CD4-positive, alpha-beta T cell (primary cell): ENCODE measurements at regions of chr14 and their contacts with region 1.

Region 1: DNA sequence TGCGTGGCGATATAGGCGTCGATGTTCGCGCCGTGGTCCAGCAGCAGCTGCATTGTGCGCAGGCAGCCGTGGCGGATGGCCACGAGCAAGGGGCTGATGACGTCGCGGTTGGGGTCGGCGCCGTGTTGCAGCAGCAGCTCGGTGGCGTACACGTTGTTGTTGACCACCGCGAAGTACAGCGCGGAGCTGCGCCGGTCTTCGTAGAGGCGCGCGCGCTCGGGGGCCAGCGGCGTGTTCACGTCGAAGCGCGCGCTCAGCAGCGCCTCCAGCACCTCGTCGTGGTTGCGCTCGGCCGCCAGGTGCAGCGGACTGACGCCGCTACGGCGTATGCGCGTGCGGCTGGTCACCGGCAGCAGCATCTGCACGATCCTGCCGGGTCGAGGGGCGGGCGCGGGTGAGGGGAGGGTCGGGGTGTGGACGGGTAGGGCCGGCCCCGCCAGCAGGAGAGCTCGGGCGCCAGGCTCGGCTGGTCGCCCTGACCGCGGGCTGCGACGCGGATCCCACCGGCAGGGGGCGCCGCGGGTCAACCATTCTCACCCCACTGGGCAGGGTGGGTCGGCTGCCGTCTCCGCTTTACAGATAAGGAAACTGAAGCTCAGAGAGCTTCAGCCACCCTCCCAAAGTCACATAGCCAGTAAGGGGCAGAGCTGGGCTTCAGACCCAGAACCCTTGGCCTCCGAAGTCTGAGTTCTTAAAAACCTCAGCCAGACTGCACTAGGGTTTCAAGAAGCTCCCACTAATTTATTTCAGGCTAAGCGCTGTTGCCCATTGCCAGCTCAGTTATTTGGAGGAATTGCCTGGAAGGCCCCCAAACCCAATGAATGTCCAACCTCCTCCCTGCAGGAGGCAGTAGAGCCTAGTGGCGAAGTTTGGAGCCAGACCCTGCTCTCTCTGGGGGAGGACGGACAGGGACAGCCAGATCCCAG is 12.4 kb downstream of the FAM181A start:
- DNase-seq: peak; percentile 75 to 95 (median 90)
- ATAC-seq: peak; percentile 91
- H3K4me3 ChIP-seq: peak overlapping the region; percentile 44
- H3K4me3 Mint-ChIP-seq: peak overlapping the region; percentile 68
- H3K27ac ChIP-seq: no peak overlapping the region
- H3K27ac Mint-ChIP-seq: no peak overlapping the region
- H3K4me1 ChIP-seq: peaks cover 15% of the 10 kb centered on the region
- H3K4me1 Mint-ChIP-seq: no peaks in the 10 kb centered on the region
- H3K27me3 ChIP-seq: peaks cover 0 to 7% of the 10 kb centered on the region in 2 experiments
- H3K27me3 Mint-ChIP-seq: peaks cover 9% of the 10 kb centered on the region
- CTCF ChIP-seq: peak; percentile 99

Region 2: DNA sequence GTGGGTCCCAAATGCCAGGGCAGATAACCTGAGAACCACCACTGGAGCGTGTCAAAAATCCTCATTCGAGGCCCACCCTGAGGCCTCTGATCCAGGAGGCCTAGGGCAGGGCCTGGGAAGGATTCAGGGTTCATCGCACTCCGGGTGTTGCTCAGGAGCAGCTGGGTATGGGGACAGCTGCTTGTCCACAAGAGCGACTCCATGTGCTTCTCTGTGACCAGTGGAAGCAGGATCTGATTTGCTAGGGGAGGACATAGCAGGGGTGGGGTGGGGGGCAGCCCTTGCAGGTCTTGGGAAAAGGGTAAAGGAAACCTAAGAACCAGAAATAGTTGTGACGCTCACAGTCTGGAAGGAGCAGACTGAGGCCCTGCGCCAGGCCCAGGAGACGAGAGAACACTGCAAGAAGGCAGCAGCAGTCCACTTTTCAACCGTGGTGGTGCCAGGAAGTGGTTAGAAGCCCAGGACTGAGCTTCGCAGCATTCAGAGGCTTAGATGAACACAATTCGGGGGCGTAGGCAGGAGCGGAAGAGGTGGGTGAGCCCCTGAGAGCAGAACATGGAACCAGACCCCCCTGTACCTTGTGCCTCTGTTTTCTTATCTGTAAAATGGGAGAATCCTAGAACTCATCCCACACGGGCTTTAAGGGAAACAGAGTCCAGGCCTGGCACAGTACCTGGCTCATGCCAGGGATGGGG is 857.5 kb before region 1 on chr14:
- CTCF ChIA-PET with region 1: no interaction called
- POLR2A ChIA-PET with region 1: no interaction called
- intact Hi-C with region 1: no loop called
- DNase-seq: peak in 3 of 14 experiments; percentile 16 to 55 (median 24)
- ATAC-seq: no peak
- H3K4me3 ChIP-seq: no peak overlapping the region
- H3K4me3 Mint-ChIP-seq: peak overlapping the region; percentile 13
- H3K27ac ChIP-seq: no peak overlapping the region
- H3K27ac Mint-ChIP-seq: peak overlapping the region; percentile 47
- H3K4me1 ChIP-seq: peaks cover 29% of the 10 kb centered on the region
- H3K4me1 Mint-ChIP-seq: peaks cover 23% of the 10 kb centered on the region
- H3K27me3 ChIP-seq: no peaks in the 10 kb centered on the region
- H3K27me3 Mint-ChIP-seq: no peaks in the 10 kb centered on the region
- CTCF ChIP-seq: no peak

Region 3: GRCh38 chr14:93824518-93825234 is 114.9 kb before region 1 on chr14:
- CTCF ChIA-PET with region 1: no interaction called
- POLR2A ChIA-PET with region 1: no interaction called
- intact Hi-C with region 1: no loop called
- DNase-seq: peak in 1 of 14 experiments; percentile 9
- ATAC-seq: no peak
- H3K4me3 ChIP-seq: no peak overlapping the region
- H3K4me3 Mint-ChIP-seq: no peak overlapping the region
- H3K27ac ChIP-seq: no peak overlapping the region
- H3K27ac Mint-ChIP-seq: no peak overlapping the region
- H3K4me1 ChIP-seq: no peaks in the 10 kb centered on the region
- H3K4me1 Mint-ChIP-seq: no peaks in the 10 kb centered on the region
- H3K27me3 ChIP-seq: peaks cover 5% of the 10 kb centered on the region in 2 experiments
- H3K27me3 Mint-ChIP-seq: peaks cover 33% of the 10 kb centered on the region
- CTCF ChIP-seq: no peak

Region 4: DNA sequence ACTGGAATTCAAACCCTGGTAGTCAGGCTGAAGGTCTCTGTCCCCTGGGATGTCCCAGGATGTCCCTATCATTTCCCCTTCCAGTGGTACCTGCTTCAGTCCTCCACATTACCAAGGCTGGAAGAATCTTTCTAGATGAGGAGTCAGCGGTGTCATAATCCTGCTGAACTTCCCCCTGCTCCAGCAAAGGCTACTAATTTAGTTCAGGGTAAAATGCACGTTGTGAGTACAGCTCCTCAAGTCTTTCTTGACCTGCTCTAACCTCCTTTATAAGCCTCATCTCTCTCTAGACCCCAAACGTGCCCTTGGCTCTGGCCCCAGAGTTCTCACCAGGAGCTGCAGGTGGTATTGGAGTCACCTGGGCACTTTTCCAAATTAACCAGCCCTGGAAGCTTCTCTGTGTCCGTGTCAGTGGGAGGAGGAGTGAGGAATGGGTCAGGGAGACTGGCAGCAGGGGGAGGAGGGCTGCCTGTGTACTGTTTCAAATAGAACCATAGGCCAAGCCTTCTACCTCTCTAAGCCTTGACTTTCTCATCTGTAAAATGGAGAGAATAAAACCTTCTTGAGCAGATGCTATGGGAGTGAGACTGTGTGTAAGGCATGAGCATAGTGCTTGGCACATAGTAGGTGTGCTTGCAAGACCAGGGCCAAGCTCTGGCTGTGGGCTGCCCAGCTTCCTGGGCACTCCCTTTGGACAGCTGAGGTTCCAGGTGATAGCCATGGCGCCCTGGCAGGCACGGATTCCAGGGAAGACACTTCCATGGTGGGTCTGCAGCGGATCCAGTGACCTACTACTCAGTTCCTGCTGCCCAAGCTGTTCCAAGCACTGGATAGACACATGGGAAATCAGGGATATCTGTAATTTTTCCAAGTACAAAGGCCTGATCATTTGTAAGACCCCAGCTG is 12.3 kb after region 1 on chr14:
- CTCF ChIA-PET with region 1: interaction called, 21 read pairs
- POLR2A ChIA-PET with region 1: interaction called, 11 read pairs
- intact Hi-C with region 1: loop called in 1 of 2 experiments (anchors 1 kb)
- DNase-seq: no peak
- ATAC-seq: no peak
- H3K4me3 ChIP-seq: no peak overlapping the region
- H3K4me3 Mint-ChIP-seq: no peak overlapping the region
- H3K27ac ChIP-seq: no peak overlapping the region
- H3K27ac Mint-ChIP-seq: no peak overlapping the region
- H3K4me1 ChIP-seq: peaks cover 49% of the 10 kb centered on the region
- H3K4me1 Mint-ChIP-seq: peaks cover 41% of the 10 kb centered on the region
- H3K27me3 ChIP-seq: no peaks in the 10 kb centered on the region
- H3K27me3 Mint-ChIP-seq: no peaks in the 10 kb centered on the region
- CTCF ChIP-seq: no peak

Region 5: GRCh38 chr14:93959239-93960107 is 19.9 kb after region 1 on chr14:
- CTCF ChIA-PET with region 1: interaction called, 31 read pairs
- POLR2A ChIA-PET with region 1: interaction called, 20 read pairs
- intact Hi-C with region 1: loop called in 1 of 2 experiments (anchors 1 kb)
- DNase-seq: peak; percentile 77 to 98 (median 88)
- ATAC-seq: peak; percentile 79
- H3K4me3 ChIP-seq: peak overlapping the region; percentile 24
- H3K4me3 Mint-ChIP-seq: peak overlapping the region; percentile 76
- H3K27ac ChIP-seq: peak overlapping the region; percentile 42 to 71
- H3K27ac Mint-ChIP-seq: peak overlapping the region; percentile 91
- H3K4me1 ChIP-seq: peaks cover 100% of the 10 kb centered on the region
- H3K4me1 Mint-ChIP-seq: peaks cover 96% of the 10 kb centered on the region
- H3K27me3 ChIP-seq: no peaks in the 10 kb centered on the region
- H3K27me3 Mint-ChIP-seq: no peaks in the 10 kb centered on the region
- CTCF ChIP-seq: no peak

Region 6: GRCh38 chr14:93970549-93970946 is 31.0 kb after region 1 on chr14:
- CTCF ChIA-PET with region 1: interaction called, 163 read pairs
- POLR2A ChIA-PET with region 1: interaction called, 80 read pairs
- intact Hi-C with region 1: loop called (anchors 1 kb)
- DNase-seq: peak; percentile 61 to 87 (median 70)
- ATAC-seq: peak; percentile 95
- H3K4me3 ChIP-seq: peak overlapping the region; percentile 59
- H3K4me3 Mint-ChIP-seq: peak overlapping the region; percentile 93
- H3K27ac ChIP-seq: no peak overlapping the region
- H3K27ac Mint-ChIP-seq: peak overlapping the region; percentile 28
- H3K4me1 ChIP-seq: peaks cover 75% of the 10 kb centered on the region
- H3K4me1 Mint-ChIP-seq: peaks cover 32% of the 10 kb centered on the region
- H3K27me3 ChIP-seq: no peaks in the 10 kb centered on the region
- H3K27me3 Mint-ChIP-seq: no peaks in the 10 kb centered on the region
- CTCF ChIP-seq: peak; percentile 72

Region 7: GRCh38 chr14:93975791-93976476 is 36.4 kb after region 1 on chr14:
- CTCF ChIA-PET with region 1: interaction called, 163 read pairs
- POLR2A ChIA-PET with region 1: interaction called, 80 read pairs
- intact Hi-C with region 1: no loop called
- DNase-seq: peak in 2 of 14 experiments; percentile 48 to 52
- ATAC-seq: no peak
- H3K4me3 ChIP-seq: peak overlapping the region; percentile 17
- H3K4me3 Mint-ChIP-seq: peak overlapping the region; percentile 8
- H3K27ac ChIP-seq: no peak overlapping the region
- H3K27ac Mint-ChIP-seq: peak overlapping the region; percentile 66
- H3K4me1 ChIP-seq: peaks cover 88% of the 10 kb centered on the region
- H3K4me1 Mint-ChIP-seq: peaks cover 67% of the 10 kb centered on the region
- H3K27me3 ChIP-seq: no peaks in the 10 kb centered on the region
- H3K27me3 Mint-ChIP-seq: no peaks in the 10 kb centered on the region
- CTCF ChIP-seq: no peak

Region 8: DNA sequence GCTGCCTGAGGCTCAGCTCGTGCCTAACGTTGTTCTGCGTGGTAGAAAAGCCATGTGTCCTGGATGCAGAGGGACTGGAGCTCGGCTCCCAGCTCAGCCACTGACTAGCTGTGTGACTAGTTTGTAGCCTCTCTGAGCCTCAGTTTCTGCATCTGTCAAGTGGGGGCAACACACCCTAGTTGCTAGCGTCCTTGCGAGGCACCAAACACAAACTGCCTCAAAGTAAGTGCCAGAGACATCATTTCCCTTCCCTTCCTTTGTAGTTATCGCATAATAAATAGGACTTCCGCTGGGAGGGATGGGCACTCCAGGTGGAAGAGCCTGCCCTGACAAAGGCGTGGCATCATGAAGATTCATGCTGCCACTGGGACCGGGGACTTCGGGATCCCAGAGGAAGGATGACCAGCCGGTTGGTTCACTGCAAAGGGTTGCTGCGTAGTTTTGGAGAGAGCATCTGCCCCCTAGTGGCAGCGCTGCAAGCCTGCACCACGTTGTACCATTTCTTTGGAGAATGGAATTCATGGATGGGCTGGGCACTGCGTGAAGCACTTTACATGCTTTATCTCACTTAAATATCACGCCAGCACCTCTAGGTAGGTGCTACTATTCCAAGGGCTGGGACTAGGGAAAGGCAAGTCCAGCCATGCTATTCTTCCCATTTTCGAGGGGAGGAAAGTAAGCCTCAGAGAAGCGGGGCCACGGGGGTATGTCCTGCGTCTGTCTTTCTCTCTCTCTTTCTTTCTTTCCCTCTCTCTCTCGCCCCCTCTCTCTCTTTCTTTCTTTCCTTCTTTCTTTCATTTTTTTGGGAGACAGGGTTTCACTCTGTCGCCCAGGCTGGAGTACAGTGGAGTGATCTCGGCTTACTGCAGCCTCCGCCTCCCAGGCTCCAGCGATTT is 62.2 kb after region 1 on chr14:
- CTCF ChIA-PET with region 1: interaction called, 39 read pairs
- POLR2A ChIA-PET with region 1: interaction called, 16 read pairs
- intact Hi-C with region 1: loop called (anchors 1 kb)
- DNase-seq: peak; percentile 29 to 82 (median 48)
- ATAC-seq: peak; percentile 86
- H3K4me3 ChIP-seq: no peak overlapping the region
- H3K4me3 Mint-ChIP-seq: no peak overlapping the region
- H3K27ac ChIP-seq: no peak overlapping the region
- H3K27ac Mint-ChIP-seq: no peak overlapping the region
- H3K4me1 ChIP-seq: peaks cover 12% of the 10 kb centered on the region
- H3K4me1 Mint-ChIP-seq: peaks cover 8% of the 10 kb centered on the region
- H3K27me3 ChIP-seq: peaks cover 0 to 6% of the 10 kb centered on the region in 2 experiments
- H3K27me3 Mint-ChIP-seq: peaks cover 13% of the 10 kb centered on the region
- CTCF ChIP-seq: peak; percentile 97

Region 9: DNA sequence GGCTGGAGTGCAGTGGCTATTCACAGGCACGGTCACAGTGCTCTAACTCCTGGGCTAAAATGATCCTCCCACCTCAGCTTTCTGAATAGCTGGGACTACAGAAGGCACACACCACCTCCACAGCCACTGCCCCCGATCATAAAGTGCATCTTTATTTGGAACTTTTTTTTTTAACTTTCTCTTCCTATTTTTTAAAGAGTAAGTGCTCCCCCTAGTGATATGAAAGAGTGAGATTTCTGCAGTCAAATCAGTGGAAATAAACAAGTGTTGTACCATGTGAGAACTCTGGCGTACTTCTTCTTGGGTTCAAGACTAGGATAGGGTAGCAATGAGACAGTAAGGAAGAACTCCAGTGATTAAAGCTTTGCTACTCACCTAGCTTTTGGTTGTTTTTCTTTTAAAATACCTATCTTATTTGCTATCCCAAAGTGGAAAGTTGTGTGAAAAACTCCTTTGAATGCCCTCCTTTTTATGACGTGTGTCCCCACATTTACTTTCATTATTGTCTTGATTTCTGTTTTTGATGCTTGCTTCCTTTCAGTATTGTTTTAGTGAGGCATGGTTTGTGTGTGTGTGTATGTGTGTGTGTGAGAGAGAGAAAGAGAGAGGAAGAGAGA is 241.2 kb after region 1 on chr14:
- CTCF ChIA-PET with region 1: interaction called, 4 read pairs
- POLR2A ChIA-PET with region 1: interaction called, 8 read pairs
- intact Hi-C with region 1: loop called (anchors 2 to 5 kb)
- DNase-seq: peak in 4 of 14 experiments; percentile 25 to 80 (median 77)
- ATAC-seq: peak; percentile 86
- H3K4me3 ChIP-seq: peak overlapping the region; percentile 11
- H3K4me3 Mint-ChIP-seq: peak overlapping the region; percentile 43
- H3K27ac ChIP-seq: no peak overlapping the region
- H3K27ac Mint-ChIP-seq: peak overlapping the region; percentile 71
- H3K4me1 ChIP-seq: peaks cover 3% of the 10 kb centered on the region
- H3K4me1 Mint-ChIP-seq: peaks cover 24% of the 10 kb centered on the region
- H3K27me3 ChIP-seq: no peaks in the 10 kb centered on the region
- H3K27me3 Mint-ChIP-seq: peaks cover 13% of the 10 kb centered on the region
- CTCF ChIP-seq: peak; percentile 71

Region 10: DNA sequence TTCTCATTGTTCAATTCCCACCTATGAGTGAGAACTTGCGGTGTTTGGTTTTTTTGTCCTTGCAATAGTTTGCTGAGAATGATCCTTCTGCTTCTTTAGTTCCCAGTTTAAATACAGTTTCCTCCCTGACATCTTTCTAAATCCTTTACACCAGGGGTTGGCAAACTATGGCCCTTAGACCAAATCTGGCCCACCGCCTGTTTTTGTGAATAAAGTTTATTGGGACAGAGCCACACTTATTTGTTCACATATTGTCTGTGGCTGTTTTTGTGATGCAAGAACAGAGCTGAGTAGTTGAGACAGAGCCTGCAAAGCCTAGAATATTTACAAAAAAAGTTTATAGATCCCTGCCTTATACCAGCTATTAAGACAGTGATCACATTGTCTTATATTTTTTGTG is 299.8 kb after region 1 on chr14:
- CTCF ChIA-PET with region 1: no interaction called
- POLR2A ChIA-PET with region 1: no interaction called
- intact Hi-C with region 1: no loop called
- DNase-seq: no peak
- ATAC-seq: no peak
- H3K4me3 ChIP-seq: no peak overlapping the region
- H3K4me3 Mint-ChIP-seq: no peak overlapping the region
- H3K27ac ChIP-seq: no peak overlapping the region
- H3K27ac Mint-ChIP-seq: no peak overlapping the region
- H3K4me1 ChIP-seq: no peaks in the 10 kb centered on the region
- H3K4me1 Mint-ChIP-seq: no peaks in the 10 kb centered on the region
- H3K27me3 ChIP-seq: no peaks in the 10 kb centered on the region
- H3K27me3 Mint-ChIP-seq: peaks cover 3% of the 10 kb centered on the region
- CTCF ChIP-seq: no peak

Region 11: GRCh38 chr14:94559638-94560290 is 620.2 kb after region 1 on chr14:
- CTCF ChIA-PET with region 1: no interaction called
- POLR2A ChIA-PET with region 1: no interaction called
- intact Hi-C with region 1: no loop called
- DNase-seq: no peak
- ATAC-seq: no peak
- H3K4me3 ChIP-seq: no peak overlapping the region
- H3K4me3 Mint-ChIP-seq: no peak overlapping the region
- H3K27ac ChIP-seq: no peak overlapping the region
- H3K27ac Mint-ChIP-seq: no peak overlapping the region
- H3K4me1 ChIP-seq: no peaks in the 10 kb centered on the region
- H3K4me1 Mint-ChIP-seq: no peaks in the 10 kb centered on the region
- H3K27me3 ChIP-seq: peaks cover 0 to 5% of the 10 kb centered on the region in 2 experiments
- H3K27me3 Mint-ChIP-seq: peaks cover 55% of the 10 kb centered on the region
- CTCF ChIP-seq: no peak